Naive thymus-derived CD8-positive, alpha-beta T cell (primary cell): ENCODE measurements at regions of chr17 and their contacts with region 1.

Region 1: GRCh38 chr17:39352511-39352910 is 48.9 kb downstream of the FBXL20 start:
- DNase-seq: no peak
- ATAC-seq: no peak
- H3K4me3 Mint-ChIP-seq: no peak overlapping the region
- H3K27ac Mint-ChIP-seq: peak overlapping the region in 1 of 10 donors; percentile 1
- H3K4me1 Mint-ChIP-seq: peaks cover 2 to 22% (median 12%) of the 10 kb centered on the region in 4 donors
- H3K27me3 Mint-ChIP-seq: no peaks in the 10 kb centered on the region

Region 2: GRCh38 chr17:39365242-39365641 is 12.7 kb after region 1 on chr17:
- POLR2A ChIA-PET with region 1: interaction called, 10 read pairs
- DNase-seq: no peak
- ATAC-seq: no peak
- H3K4me3 Mint-ChIP-seq: no peak overlapping the region
- H3K27ac Mint-ChIP-seq: no peak overlapping the region
- H3K4me1 Mint-ChIP-seq: peaks cover 14 to 38% (median 21%) of the 10 kb centered on the region in 4 donors
- H3K27me3 Mint-ChIP-seq: peaks cover 0 to 1% (median 0%) of the 10 kb centered on the region in 5 donors